ENCODE measurements at regions of chr5 and their contacts with region 1.

Region 1: GRCh38 chr5:55307383-55308253 is at the starts of genes DHX29 and MTREX:
- DNase-seq: peak; percentile 93
- ATAC-seq: peak; percentile 91
- H3K4me3 ChIP-seq: peak within 1 kb of the TSS; percentile 68 to 99 (median 96)
- H3K4me3 Mint-ChIP-seq: no peak within 1 kb of the TSS
- H3K27ac ChIP-seq: peak within 1 kb of the TSS; percentile 88 to 98
- H3K27ac Mint-ChIP-seq: no peak within 1 kb of the TSS
- H3K4me1 ChIP-seq: peaks cover 45 to 46% of the 10 kb centered on the region in 2 donors
- H3K4me1 Mint-ChIP-seq: peaks cover 33% of the 10 kb centered on the region
- H3K27me3 ChIP-seq: no peaks in the 10 kb centered on the region
- H3K27me3 Mint-ChIP-seq: no peaks in the 10 kb centered on the region
- CTCF ChIP-seq: no peak
- total RNA-seq, gene DHX29: 17.9 and 18.1 TPM in 2 replicates
- total RNA-seq, gene MTREX: 91.7 and 94.0 TPM in 2 replicates

Region 2: GRCh38 chr5:55232985-55233928 is 74.4 kb before region 1 on chr5 and contains the start of gene CCNO:
- CTCF ChIA-PET with region 1: no interaction called
- POLR2A ChIA-PET with region 1: no interaction called
- intact Hi-C with region 1: loop called (anchors 5 kb)
- DNase-seq: peak; percentile 77
- ATAC-seq: peak; percentile 63
- H3K4me3 ChIP-seq: peak within 1 kb of the TSS; percentile 38 to 81 (median 55)
- H3K4me3 Mint-ChIP-seq: peak within 1 kb of the TSS; percentile 91
- H3K27ac ChIP-seq: no peak within 1 kb of the TSS
- H3K27ac Mint-ChIP-seq: peak within 1 kb of the TSS; percentile 34
- H3K4me1 ChIP-seq: peaks cover 37 to 43% of the 10 kb centered on the region in 2 donors
- H3K4me1 Mint-ChIP-seq: peaks cover 30% of the 10 kb centered on the region
- H3K27me3 ChIP-seq: peaks cover 4 to 75% (median 54%) of the 10 kb centered on the region in 4 experiments
- H3K27me3 Mint-ChIP-seq: peaks cover 66% of the 10 kb centered on the region
- CTCF ChIP-seq: no peak
- total RNA-seq, gene CCNO: not detected in 2 replicates

Region 3: DNA sequence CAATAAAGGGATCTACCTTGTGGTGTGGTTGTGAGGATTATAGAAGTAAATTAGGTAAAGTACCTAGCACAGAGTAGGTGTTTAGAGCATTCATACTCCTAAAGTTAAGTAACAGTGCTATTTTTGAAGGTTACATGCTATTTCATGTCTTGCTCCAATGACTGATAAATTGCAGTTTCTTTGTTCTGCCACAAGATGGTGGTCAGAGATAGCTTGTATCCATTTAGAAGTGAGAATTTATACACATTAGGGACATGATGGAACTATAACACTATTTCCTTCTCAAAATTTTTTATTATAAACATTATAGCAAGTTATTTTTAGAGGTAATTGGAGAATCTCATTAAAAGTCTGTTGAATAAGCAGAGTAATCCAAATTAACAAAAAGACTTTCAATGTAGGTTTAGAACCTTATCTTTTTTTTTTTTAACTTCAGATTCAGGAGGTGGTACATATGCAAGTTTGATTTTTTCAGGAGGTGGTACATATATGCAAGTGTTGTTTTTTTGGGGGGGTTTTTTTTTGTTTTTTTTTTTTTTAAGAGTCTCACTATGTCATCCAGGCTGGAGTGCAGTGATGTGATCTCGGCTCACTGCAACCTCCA is 17.3 kb after region 1 on chr5:
- CTCF ChIA-PET with region 1: no interaction called
- POLR2A ChIA-PET with region 1: interaction called, 11 read pairs
- intact Hi-C with region 1: loop called (anchors 2 kb)
- DNase-seq: peak; percentile 37
- ATAC-seq: peak; percentile 57
- H3K4me3 ChIP-seq: no peak overlapping the region
- H3K4me3 Mint-ChIP-seq: no peak overlapping the region
- H3K27ac ChIP-seq: no peak overlapping the region
- H3K27ac Mint-ChIP-seq: no peak overlapping the region
- H3K4me1 ChIP-seq: no peaks in the 10 kb centered on the region
- H3K4me1 Mint-ChIP-seq: peaks cover 10% of the 10 kb centered on the region
- H3K27me3 ChIP-seq: no peaks in the 10 kb centered on the region
- H3K27me3 Mint-ChIP-seq: no peaks in the 10 kb centered on the region
- CTCF ChIP-seq: peak; percentile 68

Region 4: DNA sequence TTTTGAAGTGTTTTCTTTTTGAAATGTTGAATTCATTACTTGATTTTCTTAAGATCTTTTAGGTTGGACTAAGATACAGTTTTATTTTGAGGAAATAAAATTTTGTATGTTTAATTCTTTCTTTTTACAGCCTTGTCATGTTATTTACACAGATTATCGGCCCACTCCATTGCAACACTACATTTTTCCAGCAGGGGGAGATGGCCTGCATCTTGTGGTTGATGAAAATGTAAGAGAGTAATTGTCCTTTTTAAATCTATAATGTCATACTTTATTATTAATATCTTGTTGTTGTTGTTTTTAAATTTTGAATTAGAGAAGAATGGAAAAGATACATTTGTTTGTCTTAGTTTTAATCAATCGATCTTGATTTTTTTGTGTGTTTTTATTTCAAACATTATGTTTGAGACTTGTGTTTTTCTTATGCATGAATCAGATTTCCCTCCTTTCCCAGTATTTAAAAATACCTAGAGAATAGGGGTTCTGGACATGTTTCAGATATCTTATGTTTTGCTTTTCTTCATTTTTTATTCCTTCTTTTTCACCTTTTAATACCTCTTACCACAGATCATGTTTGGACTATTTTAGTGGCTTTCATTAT is 36.9 kb after region 1 on chr5:
- CTCF ChIA-PET with region 1: interaction called, 3 read pairs
- POLR2A ChIA-PET with region 1: no interaction called
- intact Hi-C with region 1: loop called (anchors 5 kb)
- DNase-seq: peak; percentile 67
- ATAC-seq: peak; percentile 47
- H3K4me3 ChIP-seq: no peak overlapping the region
- H3K4me3 Mint-ChIP-seq: no peak overlapping the region
- H3K27ac ChIP-seq: peak overlapping the region in 1 of 2 donors; percentile 52
- H3K27ac Mint-ChIP-seq: no peak overlapping the region
- H3K4me1 ChIP-seq: no peaks in the 10 kb centered on the region
- H3K4me1 Mint-ChIP-seq: no peaks in the 10 kb centered on the region
- H3K27me3 ChIP-seq: no peaks in the 10 kb centered on the region
- H3K27me3 Mint-ChIP-seq: no peaks in the 10 kb centered on the region
- CTCF ChIP-seq: peak; percentile 99

Region 5: DNA sequence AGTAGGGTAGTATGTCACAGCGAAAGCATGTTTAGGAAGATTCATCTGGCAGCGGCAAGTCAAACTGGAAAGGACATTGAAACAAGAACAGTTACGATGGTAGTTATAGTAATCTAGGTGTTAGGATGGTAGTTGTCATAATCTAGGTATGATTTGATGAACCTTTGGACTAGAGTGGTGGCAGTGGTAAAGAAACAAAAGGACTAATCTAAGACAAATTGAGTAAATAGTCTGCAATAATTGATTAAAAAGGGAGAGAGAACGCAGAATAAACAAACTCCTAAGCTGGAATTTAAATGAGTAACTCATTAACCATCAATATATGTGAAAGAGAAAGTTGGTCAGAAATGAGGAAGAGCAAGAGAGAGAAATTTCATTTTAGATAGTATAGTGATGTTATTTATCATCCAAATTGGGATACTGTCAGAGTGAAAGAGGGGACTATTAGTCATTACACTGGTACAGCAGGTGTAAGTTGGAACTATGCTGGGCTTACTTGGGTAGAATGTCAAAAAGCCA is 57.0 kb after region 1 on chr5:
- CTCF ChIA-PET with region 1: no interaction called
- POLR2A ChIA-PET with region 1: no interaction called
- intact Hi-C with region 1: no loop called
- DNase-seq: no peak
- ATAC-seq: no peak
- H3K4me3 ChIP-seq: no peak overlapping the region
- H3K4me3 Mint-ChIP-seq: peak overlapping the region; percentile 1
- H3K27ac ChIP-seq: no peak overlapping the region
- H3K27ac Mint-ChIP-seq: peak overlapping the region; percentile 1
- H3K4me1 ChIP-seq: no peaks in the 10 kb centered on the region
- H3K4me1 Mint-ChIP-seq: peaks cover 12% of the 10 kb centered on the region
- H3K27me3 ChIP-seq: no peaks in the 10 kb centered on the region
- H3K27me3 Mint-ChIP-seq: no peaks in the 10 kb centered on the region
- CTCF ChIP-seq: no peak

Region 6: GRCh38 chr5:55534436-55535198 is 227.0 kb after region 1 on chr5 and contains the start of gene PLPP1:
- CTCF ChIA-PET with region 1: no interaction called
- POLR2A ChIA-PET with region 1: interaction called, 4 read pairs
- intact Hi-C with region 1: loop called (anchors 1 kb)
- DNase-seq: peak; percentile 92
- ATAC-seq: peak; percentile 78
- H3K4me3 ChIP-seq: peak within 1 kb of the TSS; percentile 71 to 93 (median 89)
- H3K4me3 Mint-ChIP-seq: peak within 1 kb of the TSS; percentile 98
- H3K27ac ChIP-seq: peak within 1 kb of the TSS; percentile 88 to 92
- H3K27ac Mint-ChIP-seq: peak within 1 kb of the TSS; percentile 96
- H3K4me1 ChIP-seq: peaks cover 18 to 23% of the 10 kb centered on the region in 2 donors
- H3K4me1 Mint-ChIP-seq: peaks cover 24% of the 10 kb centered on the region
- H3K27me3 ChIP-seq: no peaks in the 10 kb centered on the region
- H3K27me3 Mint-ChIP-seq: no peaks in the 10 kb centered on the region
- CTCF ChIP-seq: no peak
- total RNA-seq, gene PLPP1: 8.8 and 11.2 TPM in 2 replicates

Region 7: GRCh38 chr5:55711968-55712859 is 404.6 kb after region 1 on chr5 and contains the start of gene SLC38A9:
- CTCF ChIA-PET with region 1: no interaction called
- POLR2A ChIA-PET with region 1: interaction called, 3 read pairs
- intact Hi-C with region 1: loop called (anchors 1 kb)
- DNase-seq: peak; percentile 93
- ATAC-seq: peak; percentile 100
- H3K4me3 ChIP-seq: peak within 1 kb of the TSS; percentile 80 to 96 (median 94)
- H3K4me3 Mint-ChIP-seq: peak within 1 kb of the TSS; percentile 100
- H3K27ac ChIP-seq: peak within 1 kb of the TSS; percentile 49 to 74
- H3K27ac Mint-ChIP-seq: peak within 1 kb of the TSS; percentile 93
- H3K4me1 ChIP-seq: peaks cover 11 to 19% of the 10 kb centered on the region in 2 donors
- H3K4me1 Mint-ChIP-seq: peaks cover 19% of the 10 kb centered on the region
- H3K27me3 ChIP-seq: no peaks in the 10 kb centered on the region
- H3K27me3 Mint-ChIP-seq: no peaks in the 10 kb centered on the region
- CTCF ChIP-seq: no peak
- total RNA-seq, gene SLC38A9: 36.3 and 43.5 TPM in 2 replicates

Measured in B cell (primary cell).